Heart right ventricle (tissue), 16 donors: ENCODE measurements at regions of chr4 and their contacts with region 1.

Region 1: GRCh38 chr4:15253201-15253748 is 174.6 kb upstream of the C1QTNF7 start:
- DNase-seq: no peak
- ATAC-seq: no peak
- H3K4me3 ChIP-seq: no peak overlapping the region
- H3K27ac ChIP-seq: no peak overlapping the region
- H3K4me1 ChIP-seq: peaks cover 0 to 23% (median 0%) of the 10 kb centered on the region in 9 donors
- H3K27me3 ChIP-seq: no peaks in the 10 kb centered on the region
- CTCF ChIP-seq: no peak

Region 2: DNA sequence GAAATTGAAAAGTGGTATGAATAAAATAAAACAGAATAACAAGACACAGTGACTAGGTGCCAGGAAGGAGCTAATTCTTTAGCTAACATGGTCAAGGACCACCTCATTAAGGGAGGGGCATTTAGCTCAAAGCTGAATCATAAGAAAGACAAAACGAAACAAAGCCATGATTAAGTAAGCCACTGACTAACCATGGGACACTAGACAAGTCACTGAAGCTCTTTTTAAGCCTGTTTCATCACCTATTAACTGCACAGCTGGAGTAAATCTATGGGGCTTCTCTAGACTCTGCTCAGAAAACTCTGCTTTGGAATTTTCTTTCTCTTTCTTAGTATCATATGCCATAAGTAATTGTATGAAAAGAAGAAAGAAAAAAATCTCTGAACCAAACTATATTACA is 124.8 kb after region 1 on chr4:
- intact Hi-C with region 1: loop called in 1 of 10 experiments (anchors 2 kb)
- DNase-seq: no peak
- ATAC-seq: peak in 6 of 8 donors; percentile 31 to 79 (median 56)
- H3K4me3 ChIP-seq: no peak overlapping the region
- H3K27ac ChIP-seq: peak overlapping the region in 7 of 10 donors; percentile 20 to 77 (median 32)
- H3K4me1 ChIP-seq: peaks cover 0 to 39% (median 16%) of the 10 kb centered on the region in 9 donors
- H3K27me3 ChIP-seq: no peaks in the 10 kb centered on the region
- CTCF ChIP-seq: no peak

Region 3: DNA sequence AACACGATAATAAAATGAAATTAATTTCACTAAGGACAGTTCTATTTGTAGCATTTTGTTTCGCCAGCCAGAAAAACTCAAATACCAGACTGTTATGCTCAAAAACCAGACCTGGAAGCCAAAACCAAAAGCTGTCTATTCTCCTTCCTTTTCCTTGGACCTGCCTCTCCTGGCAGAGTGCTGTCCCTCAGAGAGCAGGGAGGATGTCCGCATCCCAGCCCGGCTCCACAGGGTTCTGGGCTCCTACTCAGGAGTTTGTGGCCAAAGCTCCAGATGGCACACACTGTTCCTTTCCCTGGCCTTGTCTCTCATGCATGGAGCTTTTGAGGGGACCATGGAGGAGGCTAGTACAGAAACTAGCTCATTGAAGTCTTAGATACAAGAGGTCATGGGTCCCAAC is 132.7 kb after region 1 on chr4:
- intact Hi-C with region 1: loop called in 1 of 10 experiments (anchors 5 kb)
- DNase-seq: peak in 1 of 2 donors; percentile 34
- ATAC-seq: peak; percentile 63 to 82 (median 72)
- H3K4me3 ChIP-seq: no peak overlapping the region
- H3K27ac ChIP-seq: peak overlapping the region in 5 of 10 donors; percentile 18 to 72 (median 54)
- H3K4me1 ChIP-seq: peaks cover 0 to 22% (median 8%) of the 10 kb centered on the region in 9 donors
- H3K27me3 ChIP-seq: no peaks in the 10 kb centered on the region
- CTCF ChIP-seq: no peak

Region 4: GRCh38 chr4:15451866-15452765 is 198.8 kb after region 1 on chr4:
- intact Hi-C with region 1: loop called in 1 of 10 experiments (anchors 1 kb)
- DNase-seq: no peak
- ATAC-seq: peak in 7 of 8 donors; percentile 69 to 86 (median 79)
- H3K4me3 ChIP-seq: no peak overlapping the region
- H3K27ac ChIP-seq: peak overlapping the region in 5 of 10 donors; percentile 5 to 63 (median 43)
- H3K4me1 ChIP-seq: peaks cover 10 to 39% (median 24%) of the 10 kb centered on the region in 9 donors
- H3K27me3 ChIP-seq: no peaks in the 10 kb centered on the region
- CTCF ChIP-seq: no peak